CD4-positive, alpha-beta memory T cell (primary cell): ENCODE measurements at regions of chr5 and their contacts with region 1.

Region 1: GRCh38 chr5:39080597-39081204 is 6.5 kb upstream of the RICTOR start:
- DNase-seq: peak in 2 of 5 donors; percentile 27 to 31
- H3K4me3 ChIP-seq: no peak overlapping the region
- H3K4me3 Mint-ChIP-seq: no peak overlapping the region
- H3K27ac ChIP-seq: no peak overlapping the region
- H3K27ac Mint-ChIP-seq: peak overlapping the region in 1 of 7 donors; percentile 70
- H3K4me1 ChIP-seq: peaks cover 15% of the 10 kb centered on the region
- H3K4me1 Mint-ChIP-seq: peaks cover 8 to 15% (median 11%) of the 10 kb centered on the region in 4 donors
- H3K27me3 ChIP-seq: peaks cover 29% of the 10 kb centered on the region
- H3K27me3 Mint-ChIP-seq: peaks cover 31 to 47% of the 10 kb centered on the region in 2 donors

Region 2: GRCh38 chr5:38994324-38994927 is 86.3 kb before region 1 on chr5:
- CTCF ChIA-PET with region 1: interaction called, 13 read pairs
- POLR2A ChIA-PET with region 1: no interaction called
- intact Hi-C with region 1: no loop called
- DNase-seq: peak; percentile 27 to 45 (median 39)
- H3K4me3 ChIP-seq: no peak overlapping the region
- H3K4me3 Mint-ChIP-seq: no peak overlapping the region
- H3K27ac ChIP-seq: no peak overlapping the region
- H3K27ac Mint-ChIP-seq: peak overlapping the region in 1 of 7 donors; percentile 40
- H3K4me1 ChIP-seq: peaks cover 3% of the 10 kb centered on the region
- H3K4me1 Mint-ChIP-seq: peaks cover 5 to 33% (median 20%) of the 10 kb centered on the region in 4 donors
- H3K27me3 ChIP-seq: no peaks in the 10 kb centered on the region
- H3K27me3 Mint-ChIP-seq: no peaks in the 10 kb centered on the region

Region 3: GRCh38 chr5:39005566-39006232 is 75.0 kb before region 1 on chr5:
- CTCF ChIA-PET with region 1: interaction called, 64 read pairs
- POLR2A ChIA-PET with region 1: interaction called, 4 read pairs
- intact Hi-C with region 1: loop called (anchors 2 kb)
- DNase-seq: peak in 4 of 5 donors; percentile 16 to 37 (median 23)
- H3K4me3 ChIP-seq: no peak overlapping the region
- H3K4me3 Mint-ChIP-seq: peak overlapping the region in 2 of 8 donors; percentile 5 to 42
- H3K27ac ChIP-seq: no peak overlapping the region
- H3K27ac Mint-ChIP-seq: peak overlapping the region in 5 of 7 donors; percentile 31 to 84 (median 36)
- H3K4me1 ChIP-seq: peaks cover 24% of the 10 kb centered on the region
- H3K4me1 Mint-ChIP-seq: peaks cover 36 to 53% (median 48%) of the 10 kb centered on the region in 4 donors
- H3K27me3 ChIP-seq: no peaks in the 10 kb centered on the region
- H3K27me3 Mint-ChIP-seq: no peaks in the 10 kb centered on the region

Region 4: GRCh38 chr5:39100851-39101396 is 20.2 kb after region 1 on chr5:
- CTCF ChIA-PET with region 1: interaction called, 11 read pairs
- POLR2A ChIA-PET with region 1: interaction called, 10 read pairs
- intact Hi-C with region 1: no loop called
- DNase-seq: no peak
- H3K4me3 ChIP-seq: no peak overlapping the region
- H3K4me3 Mint-ChIP-seq: peak overlapping the region in 7 of 8 donors; percentile 5 to 73 (median 49)
- H3K27ac ChIP-seq: no peak overlapping the region
- H3K27ac Mint-ChIP-seq: peak overlapping the region; percentile 26 to 87 (median 81)
- H3K4me1 ChIP-seq: peaks cover 26% of the 10 kb centered on the region
- H3K4me1 Mint-ChIP-seq: peaks cover 34 to 58% (median 40%) of the 10 kb centered on the region in 4 donors
- H3K27me3 ChIP-seq: no peaks in the 10 kb centered on the region
- H3K27me3 Mint-ChIP-seq: no peaks in the 10 kb centered on the region

Region 5: GRCh38 chr5:39164529-39165402 is 84.1 kb after region 1 on chr5:
- CTCF ChIA-PET with region 1: no interaction called
- POLR2A ChIA-PET with region 1: no interaction called
- intact Hi-C with region 1: no loop called
- DNase-seq: peak in 2 of 5 donors; percentile 37 to 62
- H3K4me3 ChIP-seq: peak overlapping the region in 1 of 2 donors; percentile 34
- H3K4me3 Mint-ChIP-seq: peak overlapping the region; percentile 42 to 83 (median 78)
- H3K27ac ChIP-seq: peak overlapping the region; percentile 54
- H3K27ac Mint-ChIP-seq: peak overlapping the region; percentile 87 to 94 (median 94)
- H3K4me1 ChIP-seq: peaks cover 100% of the 10 kb centered on the region
- H3K4me1 Mint-ChIP-seq: peaks cover 68 to 96% (median 80%) of the 10 kb centered on the region in 4 donors
- H3K27me3 ChIP-seq: no peaks in the 10 kb centered on the region
- H3K27me3 Mint-ChIP-seq: no peaks in the 10 kb centered on the region